Activated CD8-positive, alpha-beta T cell treated with anti-CD3 and anti-CD28 coated beads for 36 hours (primary cell): ENCODE measurements at regions of chr5 and their contacts with region 1.

Region 1: GRCh38 chr5:177113566-177114424 is 19.8 kb upstream of the NSD1 start:
- DNase-seq: peak; percentile 86
- ATAC-seq: peak; percentile 72
- H3K4me3 Mint-ChIP-seq: no peak overlapping the region
- H3K27ac Mint-ChIP-seq: no peak overlapping the region
- H3K4me1 Mint-ChIP-seq: peaks cover 18% of the 10 kb centered on the region
- H3K27me3 Mint-ChIP-seq: no peaks in the 10 kb centered on the region
- CTCF ChIP-seq: peak; percentile 98

Region 2: DNA sequence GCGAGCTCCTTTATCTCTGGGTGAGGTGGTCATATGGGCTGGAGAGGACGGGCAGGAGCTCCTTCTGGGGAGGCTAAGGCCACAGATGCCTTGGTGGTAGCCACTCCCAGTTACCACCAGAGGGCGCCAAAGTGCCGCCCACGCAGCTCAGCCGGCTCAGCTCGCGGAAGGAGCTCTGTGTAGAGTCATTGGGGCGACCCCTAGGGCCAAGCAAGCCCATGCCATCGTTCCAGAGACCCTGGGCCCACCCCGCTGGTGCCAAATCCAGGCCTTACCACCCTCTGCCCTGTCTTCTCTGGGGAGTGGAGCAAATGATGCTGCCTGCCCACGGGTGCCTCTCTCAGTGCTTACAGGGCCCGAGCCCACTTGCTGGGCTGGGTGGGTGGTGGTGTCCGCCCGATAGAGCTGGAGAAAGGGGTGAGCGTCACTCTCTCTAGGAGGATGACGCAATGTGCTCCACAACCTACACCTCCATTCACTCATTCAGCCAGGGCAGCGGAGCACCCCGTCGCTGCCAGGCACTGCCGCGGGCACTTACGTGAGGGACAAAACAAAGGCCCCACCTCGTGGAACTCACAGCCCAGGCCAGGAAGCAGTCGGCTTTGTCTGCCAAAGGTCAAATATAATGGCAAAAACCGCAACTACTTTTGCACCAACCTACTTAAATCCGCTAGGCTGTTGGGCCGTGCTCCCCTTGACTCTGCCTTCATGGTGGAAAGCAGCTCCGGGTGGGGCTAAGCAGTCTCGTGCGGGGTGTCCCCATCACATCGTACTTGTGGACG is 452.7 kb before region 1 on chr5:
- CTCF ChIA-PET with region 1: interaction called, 17 read pairs
- POLR2A ChIA-PET with region 1: no interaction called
- intact Hi-C with region 1: no loop called
- DNase-seq: peak; percentile 85
- ATAC-seq: peak; percentile 81
- H3K4me3 Mint-ChIP-seq: no peak overlapping the region
- H3K27ac Mint-ChIP-seq: no peak overlapping the region
- H3K4me1 Mint-ChIP-seq: peaks cover 30% of the 10 kb centered on the region
- H3K27me3 Mint-ChIP-seq: peaks cover 7% of the 10 kb centered on the region
- CTCF ChIP-seq: peak; percentile 88

Region 3: GRCh38 chr5:177126771-177127170 is 13.0 kb after region 1 on chr5:
- CTCF ChIA-PET with region 1: interaction called, 16 read pairs
- POLR2A ChIA-PET with region 1: interaction called, 10 read pairs
- intact Hi-C with region 1: no loop called
- DNase-seq: no peak
- ATAC-seq: no peak
- H3K4me3 Mint-ChIP-seq: no peak overlapping the region
- H3K27ac Mint-ChIP-seq: no peak overlapping the region
- H3K4me1 Mint-ChIP-seq: peaks cover 22% of the 10 kb centered on the region
- H3K27me3 Mint-ChIP-seq: no peaks in the 10 kb centered on the region
- CTCF ChIP-seq: no peak

Region 4: DNA sequence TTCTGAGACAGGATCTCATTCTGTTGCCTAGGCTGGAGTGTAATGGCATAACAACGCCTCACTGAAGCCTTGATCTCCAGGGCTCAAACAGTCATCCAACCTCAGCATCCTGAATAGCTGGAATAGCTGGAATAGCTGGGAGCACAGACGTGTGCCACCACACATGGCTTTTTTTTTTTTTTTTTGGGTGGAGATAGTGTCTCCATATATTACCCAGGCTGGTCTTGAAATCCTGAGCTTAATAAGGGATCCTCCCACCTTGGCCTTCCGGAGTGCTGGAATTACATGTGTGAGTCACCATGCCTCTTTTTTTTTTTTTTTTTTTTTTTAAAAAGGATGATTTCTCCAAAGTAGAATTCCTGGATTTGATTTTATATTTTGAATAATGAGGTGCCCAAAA is 80.5 kb after region 1 on chr5:
- CTCF ChIA-PET with region 1: interaction called, 22 read pairs
- POLR2A ChIA-PET with region 1: interaction called, 4 read pairs
- intact Hi-C with region 1: no loop called
- DNase-seq: no peak
- ATAC-seq: no peak
- H3K4me3 Mint-ChIP-seq: no peak overlapping the region
- H3K27ac Mint-ChIP-seq: no peak overlapping the region
- H3K4me1 Mint-ChIP-seq: peaks cover 12% of the 10 kb centered on the region
- H3K27me3 Mint-ChIP-seq: no peaks in the 10 kb centered on the region
- CTCF ChIP-seq: no peak

Region 5: DNA sequence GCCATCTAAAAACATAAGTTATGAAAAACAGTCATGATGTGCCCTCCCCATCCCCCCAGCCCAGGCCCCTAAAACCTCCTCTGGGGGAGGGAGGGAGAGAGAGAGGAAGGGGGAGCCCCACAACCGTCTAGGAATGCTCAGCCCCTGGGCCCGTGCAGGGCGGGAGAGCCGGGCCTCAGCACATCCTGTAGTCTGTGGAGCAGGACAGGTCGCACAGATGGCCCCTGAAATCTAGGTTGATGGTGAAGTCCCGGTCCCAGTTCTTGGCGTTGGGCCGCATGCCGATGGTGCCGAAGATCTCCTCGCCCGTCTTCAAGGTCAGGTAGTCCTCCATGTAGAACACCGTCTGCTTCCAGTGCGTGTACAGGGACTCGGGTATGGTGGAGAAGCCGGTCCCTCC is 151.6 kb after region 1 on chr5:
- CTCF ChIA-PET with region 1: interaction called, 11 read pairs
- POLR2A ChIA-PET with region 1: no interaction called
- intact Hi-C with region 1: no loop called
- DNase-seq: no peak
- ATAC-seq: no peak
- H3K4me3 Mint-ChIP-seq: no peak overlapping the region
- H3K27ac Mint-ChIP-seq: no peak overlapping the region
- H3K4me1 Mint-ChIP-seq: peaks cover 3% of the 10 kb centered on the region
- H3K27me3 Mint-ChIP-seq: no peaks in the 10 kb centered on the region
- CTCF ChIP-seq: no peak

Region 6: DNA sequence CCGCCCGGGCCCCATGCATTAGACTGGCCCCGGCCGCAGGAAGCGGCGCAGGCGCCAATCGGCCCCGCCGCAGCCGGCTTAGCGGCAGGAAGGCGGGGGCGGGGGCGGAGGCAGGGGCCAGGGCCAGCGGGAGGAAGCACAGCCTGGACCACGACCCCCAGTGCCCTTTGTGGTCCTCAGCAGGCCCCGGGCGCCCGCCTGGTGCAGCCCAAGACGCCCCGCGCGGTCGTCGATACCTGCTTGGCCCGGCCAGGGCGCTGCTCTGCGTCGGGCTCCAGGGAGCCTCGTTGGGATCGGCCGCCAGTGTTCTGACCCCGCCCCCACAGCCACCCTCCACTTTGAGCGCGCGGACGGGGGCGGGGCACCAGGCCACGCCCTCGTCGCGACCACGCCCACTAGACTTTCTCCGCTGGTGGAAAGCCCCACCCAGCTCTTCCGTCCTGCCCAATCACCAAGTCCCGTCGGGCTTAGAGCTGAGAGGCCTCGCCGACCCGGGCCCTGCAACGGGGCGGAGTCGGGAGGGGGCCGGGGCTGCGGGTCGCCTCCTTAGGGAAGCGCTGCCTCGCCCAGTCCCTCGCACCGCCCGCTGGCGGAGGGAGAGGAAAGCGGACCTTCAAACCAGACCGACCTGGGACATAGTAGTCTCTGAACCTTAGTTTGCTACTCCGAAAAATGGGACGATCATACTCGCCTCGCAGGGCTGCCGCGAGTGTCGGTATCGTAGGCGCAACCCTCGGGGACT is 383.7 kb after region 1 on chr5 and contains the start of gene PDLIM7:
- CTCF ChIA-PET with region 1: interaction called, 10 read pairs
- POLR2A ChIA-PET with region 1: no interaction called
- intact Hi-C with region 1: no loop called
- DNase-seq: peak; percentile 97
- ATAC-seq: peak; percentile 82
- H3K4me3 Mint-ChIP-seq: peak within 1 kb of the TSS; percentile 79
- H3K27ac Mint-ChIP-seq: peak within 1 kb of the TSS; percentile 68
- H3K4me1 Mint-ChIP-seq: peaks cover 38% of the 10 kb centered on the region
- H3K27me3 Mint-ChIP-seq: peaks cover 11% of the 10 kb centered on the region
- CTCF ChIP-seq: no peak
- total RNA-seq, gene PDLIM7: 68.4 to 73.0 TPM